ENCODE measurements at regions of chr9 and their contacts with region 1.

Region 1: GRCh38 chr9:136118320-136119060 is at the start of gene TMEM250:
- DNase-seq: peak; percentile 97 to 99 (median 98)
- ATAC-seq: peak; percentile 90 to 93 (median 91)
- H3K4me3 ChIP-seq: peak within 1 kb of the TSS; percentile 75 to 99 (median 90)
- H3K27ac ChIP-seq: peak within 1 kb of the TSS; percentile 89 to 100 (median 97)
- H3K4me1 ChIP-seq: peaks cover 3 to 41% (median 27%) of the 10 kb centered on the region in 12 donors
- H3K27me3 ChIP-seq: no peaks in the 10 kb centered on the region
- CTCF ChIP-seq: peak in 6 of 12 donors; percentile 5 to 26 (median 15)
- POLR2A ChIP-seq: peak in 1 of 2 donors; percentile 89
- total RNA-seq, gene TMEM250: 15.5 to 34.3 (median 19.9) TPM

Region 2: DNA sequence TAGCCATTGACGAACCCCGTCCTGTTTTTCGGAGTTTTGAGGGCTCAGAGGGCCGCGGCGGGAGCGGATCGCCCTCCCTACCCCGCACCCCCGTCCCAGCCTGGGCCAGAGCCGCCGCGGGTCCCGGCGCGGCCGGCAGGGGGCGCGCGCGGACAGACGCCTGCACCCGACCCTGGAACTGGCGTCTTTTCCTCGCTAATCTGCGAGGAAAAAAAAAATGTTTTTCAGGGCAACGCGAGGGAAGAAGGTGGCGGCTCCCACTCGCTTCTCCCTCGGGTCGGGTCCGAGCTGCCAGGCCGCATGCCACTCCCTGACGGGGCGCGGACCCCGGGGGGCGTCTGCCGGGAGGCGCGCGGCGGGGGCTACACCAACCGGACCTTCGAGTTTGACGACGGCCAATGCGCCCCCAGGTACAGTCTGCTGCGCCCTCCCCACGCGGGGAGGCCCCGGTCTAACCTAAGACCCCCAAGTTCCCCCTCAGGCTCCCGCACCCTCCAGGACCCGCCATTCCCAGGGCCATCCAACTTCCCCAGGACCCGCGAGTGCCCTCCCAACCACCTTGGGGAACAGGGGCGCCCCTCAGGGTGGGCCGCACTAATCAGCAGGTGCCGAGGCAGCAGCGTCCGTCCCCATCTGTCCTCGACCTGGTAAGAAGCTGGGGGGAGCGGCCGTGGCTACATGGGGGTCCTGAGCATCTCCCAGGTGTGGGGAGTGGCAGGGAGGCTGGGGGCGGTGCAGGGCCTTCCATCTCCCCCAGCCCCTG is 416.4 kb before region 1 on chr9 and contains the start of gene KCNT1:
- intact Hi-C with region 1: loop called in 4 of 10 experiments (anchors 2 to 10 kb)
- DNase-seq: peak in 2 of 5 donors; percentile 31 to 42
- ATAC-seq: peak in 2 of 4 donors; percentile 37 to 63
- H3K4me3 ChIP-seq: peak within 1 kb of the TSS in 7 of 12 donors; percentile 10 to 37 (median 21)
- H3K27ac ChIP-seq: no peak within 1 kb of the TSS
- H3K4me1 ChIP-seq: peaks cover 0 to 30% (median 10%) of the 10 kb centered on the region in 12 donors
- H3K27me3 ChIP-seq: peaks cover 0 to 45% (median 18%) of the 10 kb centered on the region in 9 donors
- CTCF ChIP-seq: peak; percentile 75 to 98 (median 90)
- POLR2A ChIP-seq: no peak
- total RNA-seq, gene KCNT1: 0.50 to 7.4 (median 2.6) TPM

Region 3: GRCh38 chr9:135864447-135865049 is 253.9 kb before region 1 on chr9:
- intact Hi-C with region 1: loop called (anchors 2 to 10 kb)
- DNase-seq: peak; percentile 41 to 74 (median 53)
- ATAC-seq: peak in 3 of 4 donors; percentile 42 to 52 (median 50)
- H3K4me3 ChIP-seq: no peak overlapping the region
- H3K27ac ChIP-seq: no peak overlapping the region
- H3K4me1 ChIP-seq: peaks cover 0 to 10% (median 3%) of the 10 kb centered on the region in 12 donors
- H3K27me3 ChIP-seq: no peaks in the 10 kb centered on the region
- CTCF ChIP-seq: peak; percentile 77 to 90 (median 82)
- POLR2A ChIP-seq: no peak

Region 4: DNA sequence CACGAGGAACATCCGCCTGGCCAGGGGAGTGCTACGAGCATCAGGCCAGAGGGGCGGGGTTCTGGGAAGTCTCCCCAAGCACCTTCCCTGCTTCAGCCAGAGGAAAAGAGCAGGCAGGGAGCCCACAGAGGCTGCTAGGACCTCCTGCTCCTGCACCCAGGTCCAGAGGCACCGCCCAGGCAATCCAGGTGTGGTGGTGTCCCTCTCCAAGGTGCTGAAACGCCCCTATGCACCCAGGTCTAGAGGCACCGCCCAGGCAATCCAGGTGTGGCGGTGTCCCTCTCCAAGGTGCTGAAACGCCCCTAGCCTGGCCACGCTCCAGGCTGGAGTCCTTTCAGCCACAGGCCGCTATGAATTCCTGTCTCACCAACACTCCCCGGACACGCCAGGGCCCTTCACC is 146.6 kb before region 1 on chr9:
- intact Hi-C with region 1: loop called in 9 of 10 experiments (anchors 1 to 2 kb)
- DNase-seq: no peak
- ATAC-seq: no peak
- H3K4me3 ChIP-seq: no peak overlapping the region
- H3K27ac ChIP-seq: no peak overlapping the region
- H3K4me1 ChIP-seq: peaks cover 0 to 37% (median 13%) of the 10 kb centered on the region in 12 donors
- H3K27me3 ChIP-seq: peaks cover 0 to 3% (median 0%) of the 10 kb centered on the region in 9 donors
- CTCF ChIP-seq: no peak
- POLR2A ChIP-seq: no peak

Region 5: DNA sequence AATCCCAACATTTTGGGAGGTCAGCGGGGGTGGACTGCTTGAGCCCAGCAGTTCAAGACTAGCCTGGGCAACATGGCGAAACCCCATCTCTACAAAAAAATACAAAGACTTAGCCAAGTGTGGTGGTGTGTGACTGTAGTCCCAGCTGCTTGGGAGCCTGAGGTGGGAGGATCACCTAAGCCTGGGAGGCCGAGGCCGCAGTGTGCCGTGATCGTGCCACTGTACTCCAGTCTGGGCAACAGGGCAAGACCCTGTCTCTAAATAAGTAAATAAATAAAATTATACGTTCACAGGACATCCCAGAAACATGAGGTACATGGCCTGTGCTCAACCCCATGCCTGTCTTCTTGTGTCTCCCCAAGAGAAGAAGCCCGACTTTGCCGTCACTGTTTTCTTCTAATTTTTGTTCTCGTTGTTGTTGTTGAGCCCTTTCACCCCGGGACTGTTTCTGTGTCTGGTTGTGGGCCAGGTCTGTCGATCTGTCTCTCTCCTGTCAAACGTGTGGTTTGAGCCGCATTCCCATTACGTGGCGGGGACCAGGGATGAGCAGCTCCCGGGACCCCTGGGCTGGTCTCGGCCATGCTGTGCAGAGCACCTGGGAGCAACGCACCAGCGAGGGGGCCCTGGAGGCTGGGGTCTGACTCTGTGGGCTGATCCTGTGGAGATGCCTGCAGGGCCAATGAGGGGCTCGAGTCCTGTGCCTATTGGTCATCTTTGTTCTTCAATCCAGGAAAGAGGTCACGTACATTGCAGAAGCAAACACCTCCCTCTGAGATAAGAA is 55.6 kb before region 1 on chr9:
- intact Hi-C with region 1: no loop called
- DNase-seq: peak in 1 of 5 donors; percentile 50
- ATAC-seq: no peak
- H3K4me3 ChIP-seq: no peak overlapping the region
- H3K27ac ChIP-seq: no peak overlapping the region
- H3K4me1 ChIP-seq: peaks cover 0 to 32% (median 5%) of the 10 kb centered on the region in 12 donors
- H3K27me3 ChIP-seq: no peaks in the 10 kb centered on the region
- CTCF ChIP-seq: no peak
- POLR2A ChIP-seq: no peak

Region 6: DNA sequence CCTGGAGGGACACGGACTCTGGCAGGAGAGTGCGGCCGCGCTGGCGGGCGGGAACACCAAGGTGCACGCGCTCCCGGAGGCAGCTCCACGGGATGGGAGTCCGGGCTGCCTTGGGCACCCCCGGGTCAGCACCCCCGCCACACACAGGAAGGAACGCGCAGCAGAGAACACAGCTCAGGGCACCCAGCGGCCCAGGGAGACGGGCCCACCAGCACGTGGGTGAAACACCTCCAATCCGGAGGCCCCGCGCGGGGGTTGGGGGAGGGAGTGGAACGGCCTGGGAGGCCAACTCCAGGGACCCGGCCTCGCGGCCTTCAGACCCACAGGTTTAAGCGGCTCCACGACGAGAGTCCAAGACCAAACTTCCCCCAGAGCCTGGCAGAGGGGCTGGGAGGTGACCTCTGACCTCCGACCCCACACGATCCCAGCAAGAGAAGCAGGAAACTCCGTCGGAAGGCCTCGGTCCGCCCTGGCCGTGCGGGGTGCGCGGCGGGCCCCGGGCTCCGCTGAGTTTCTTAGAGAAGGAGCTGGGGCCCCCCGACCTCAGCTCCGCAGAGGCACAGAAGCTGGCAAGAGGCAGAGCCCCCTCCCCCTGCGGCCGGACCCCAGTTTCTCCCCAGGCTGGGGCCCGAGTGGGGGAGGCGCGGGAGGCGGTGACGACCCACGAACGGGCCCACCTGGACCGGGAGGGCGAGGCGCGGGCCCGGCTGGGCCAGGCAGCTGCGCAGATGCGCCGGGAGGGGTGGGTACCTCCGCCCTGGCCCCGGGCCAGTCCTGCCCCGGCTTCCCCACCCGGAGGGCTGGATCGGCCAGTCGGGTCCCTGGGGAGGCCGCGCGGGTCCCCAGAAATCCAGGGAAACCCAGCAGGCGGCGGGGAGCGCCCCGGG is 24.3 kb before region 1 on chr9:
- intact Hi-C with region 1: loop called in 6 of 10 experiments (anchors 2 to 5 kb)
- DNase-seq: peak; percentile 85 to 93 (median 91)
- ATAC-seq: peak; percentile 71 to 77 (median 74)
- H3K4me3 ChIP-seq: peak overlapping the region; percentile 71 to 99 (median 89)
- H3K27ac ChIP-seq: peak overlapping the region; percentile 91 to 99 (median 98)
- H3K4me1 ChIP-seq: peaks cover 10 to 71% (median 63%) of the 10 kb centered on the region in 12 donors
- H3K27me3 ChIP-seq: no peaks in the 10 kb centered on the region
- CTCF ChIP-seq: peak in 1 of 12 donors; percentile 23
- POLR2A ChIP-seq: no peak